Activated CD4-positive, alpha-beta T cell treated with anti-CD3 and anti-CD28 coated beads for 36 hours (primary cell): ENCODE measurements at regions of chr18 and their contacts with region 1.

Region 1: DNA sequence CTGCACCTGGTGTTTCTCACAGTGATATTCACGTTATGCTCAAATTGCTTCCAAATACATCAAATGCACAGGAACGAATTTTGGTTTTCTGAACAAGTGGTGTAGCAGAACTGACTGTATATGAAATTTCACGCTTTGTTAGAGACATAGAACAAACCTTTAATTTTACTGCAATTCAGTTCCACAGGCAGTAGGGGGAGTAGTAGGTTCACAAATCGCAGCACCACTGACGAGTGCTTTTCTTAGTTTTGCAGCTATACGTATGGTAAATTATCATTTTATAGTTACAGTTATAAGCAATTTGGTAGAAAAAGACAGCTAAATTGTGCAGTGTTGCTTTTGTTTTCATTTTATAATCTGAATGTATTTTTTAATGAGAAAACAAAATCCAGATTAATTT is 113.3 kb downstream of the KIAA1328 start:
- DNase-seq: peak; percentile 17
- ATAC-seq: no peak
- H3K4me3 Mint-ChIP-seq: no peak overlapping the region
- H3K27ac Mint-ChIP-seq: no peak overlapping the region
- H3K4me1 Mint-ChIP-seq: no peaks in the 10 kb centered on the region
- H3K27me3 Mint-ChIP-seq: no peaks in the 10 kb centered on the region

Region 2: GRCh38 chr18:36931106-36931505 is 11.2 kb before region 1 on chr18:
- CTCF ChIA-PET with region 1: interaction called, 10 read pairs
- POLR2A ChIA-PET with region 1: no interaction called
- intact Hi-C with region 1: no loop called
- DNase-seq: no peak
- ATAC-seq: no peak
- H3K4me3 Mint-ChIP-seq: no peak overlapping the region
- H3K27ac Mint-ChIP-seq: no peak overlapping the region
- H3K4me1 Mint-ChIP-seq: no peaks in the 10 kb centered on the region
- H3K27me3 Mint-ChIP-seq: no peaks in the 10 kb centered on the region

Region 3: GRCh38 chr18:37341473-37342086 is 399.3 kb after region 1 on chr18:
- CTCF ChIA-PET with region 1: interaction called, 5 read pairs
- POLR2A ChIA-PET with region 1: no interaction called
- intact Hi-C with region 1: loop called in 1 of 2 experiments (anchors 2 kb)
- DNase-seq: no peak
- ATAC-seq: no peak
- H3K4me3 Mint-ChIP-seq: no peak overlapping the region
- H3K27ac Mint-ChIP-seq: no peak overlapping the region
- H3K4me1 Mint-ChIP-seq: no peaks in the 10 kb centered on the region
- H3K27me3 Mint-ChIP-seq: peaks cover 9% of the 10 kb centered on the region

Region 4: GRCh38 chr18:37476182-37476581 is 533.9 kb after region 1 on chr18:
- CTCF ChIA-PET with region 1: no interaction called
- POLR2A ChIA-PET with region 1: no interaction called
- intact Hi-C with region 1: loop called in 1 of 2 experiments (anchors 10 kb)
- DNase-seq: peak; percentile 62
- ATAC-seq: peak; percentile 33
- H3K4me3 Mint-ChIP-seq: no peak overlapping the region
- H3K27ac Mint-ChIP-seq: no peak overlapping the region
- H3K4me1 Mint-ChIP-seq: no peaks in the 10 kb centered on the region
- H3K27me3 Mint-ChIP-seq: peaks cover 7% of the 10 kb centered on the region

Region 5: GRCh38 chr18:37537868-37538525 is 595.7 kb after region 1 on chr18:
- CTCF ChIA-PET with region 1: no interaction called
- POLR2A ChIA-PET with region 1: no interaction called
- intact Hi-C with region 1: loop called (anchors 2 to 5 kb)
- DNase-seq: peak; percentile 77
- ATAC-seq: peak; percentile 51
- H3K4me3 Mint-ChIP-seq: no peak overlapping the region
- H3K27ac Mint-ChIP-seq: no peak overlapping the region
- H3K4me1 Mint-ChIP-seq: peaks cover 3% of the 10 kb centered on the region
- H3K27me3 Mint-ChIP-seq: peaks cover 27% of the 10 kb centered on the region

Region 6: GRCh38 chr18:37636831-37637477 is 694.7 kb after region 1 on chr18:
- CTCF ChIA-PET with region 1: no interaction called
- POLR2A ChIA-PET with region 1: no interaction called
- intact Hi-C with region 1: no loop called
- DNase-seq: no peak
- ATAC-seq: no peak
- H3K4me3 Mint-ChIP-seq: no peak overlapping the region
- H3K27ac Mint-ChIP-seq: no peak overlapping the region
- H3K4me1 Mint-ChIP-seq: no peaks in the 10 kb centered on the region
- H3K27me3 Mint-ChIP-seq: no peaks in the 10 kb centered on the region